ENCODE measurements at regions of chr14 and their contacts with region 1.

Region 1: GRCh38 chr14:57378669-57379068 is 11.7 kb upstream of the NAA30 start:
- DNase-seq: no peak
- H3K4me3 Mint-ChIP-seq: no peak overlapping the region
- H3K27ac Mint-ChIP-seq: no peak overlapping the region
- H3K4me1 Mint-ChIP-seq: peaks cover 6% of the 10 kb centered on the region
- H3K27me3 Mint-ChIP-seq: no peaks in the 10 kb centered on the region
- CTCF ChIP-seq: no peak

Region 2: GRCh38 chr14:56092763-56093162 is 1285.9 kb before region 1 on chr14:
- CTCF ChIA-PET with region 1: interaction called, 11 read pairs
- intact Hi-C with region 1: no loop called
- DNase-seq: no peak
- H3K4me3 Mint-ChIP-seq: no peak overlapping the region
- H3K27ac Mint-ChIP-seq: no peak overlapping the region
- H3K4me1 Mint-ChIP-seq: peaks cover 13% of the 10 kb centered on the region
- H3K27me3 Mint-ChIP-seq: no peaks in the 10 kb centered on the region
- CTCF ChIP-seq: no peak

Region 3: DNA sequence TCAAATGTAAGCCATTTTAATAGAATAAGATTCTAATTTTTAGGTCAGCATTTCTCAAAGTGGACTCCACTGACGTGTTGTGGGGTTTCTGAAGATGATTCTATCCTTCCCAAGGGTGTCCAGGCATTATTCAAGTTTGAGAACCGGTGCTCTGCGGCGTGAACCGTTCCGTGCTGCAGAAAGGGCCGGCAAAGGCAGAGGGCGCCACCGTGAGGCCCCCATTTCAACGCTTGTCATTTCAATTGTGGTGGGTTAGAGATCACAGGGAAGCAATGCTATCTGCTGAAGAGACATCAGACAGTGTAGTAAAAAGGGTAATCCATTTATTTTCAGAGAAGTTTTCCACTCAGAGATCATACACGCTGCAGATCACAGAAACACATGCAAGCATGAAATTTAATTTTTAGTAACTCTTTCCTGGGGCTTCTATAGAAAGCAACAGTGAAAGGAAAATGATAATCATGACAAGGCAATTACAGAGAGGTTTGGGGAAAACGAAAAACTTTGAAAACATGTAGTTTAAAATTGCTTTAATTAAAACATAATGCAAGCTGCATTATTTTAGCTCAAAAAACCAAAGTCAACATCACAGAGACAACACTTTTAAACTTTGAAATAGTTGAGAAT is 311.7 kb before region 1 on chr14:
- CTCF ChIA-PET with region 1: no interaction called
- intact Hi-C with region 1: loop called (anchors 10 kb)
- DNase-seq: peak; percentile 52
- H3K4me3 Mint-ChIP-seq: no peak overlapping the region
- H3K27ac Mint-ChIP-seq: no peak overlapping the region
- H3K4me1 Mint-ChIP-seq: no peaks in the 10 kb centered on the region
- H3K27me3 Mint-ChIP-seq: peaks cover 11% of the 10 kb centered on the region
- CTCF ChIP-seq: peak; percentile 55

Region 4: DNA sequence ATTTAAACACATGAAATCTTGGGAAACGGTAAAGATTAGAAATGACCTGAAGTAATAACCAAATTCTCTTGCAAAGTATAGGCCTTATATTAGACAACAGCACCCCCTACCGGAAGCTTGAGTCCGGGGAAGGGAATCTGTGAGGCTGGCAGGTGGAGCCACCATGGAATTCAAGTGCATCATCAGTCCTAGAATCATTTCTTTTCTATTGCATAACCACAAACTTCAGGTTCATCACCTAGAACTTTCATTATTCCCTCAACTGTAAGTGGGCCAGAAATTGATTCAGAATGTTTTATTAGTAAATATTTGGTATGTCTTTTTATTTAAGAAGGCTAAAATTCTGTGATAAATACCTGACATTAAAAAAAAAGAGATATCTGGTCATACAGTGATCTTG is 61.4 kb before region 1 on chr14:
- CTCF ChIA-PET with region 1: interaction called, 4 read pairs
- intact Hi-C with region 1: loop called (anchors 1 kb)
- DNase-seq: peak; percentile 86
- H3K4me3 Mint-ChIP-seq: no peak overlapping the region
- H3K27ac Mint-ChIP-seq: no peak overlapping the region
- H3K4me1 Mint-ChIP-seq: no peaks in the 10 kb centered on the region
- H3K27me3 Mint-ChIP-seq: no peaks in the 10 kb centered on the region
- CTCF ChIP-seq: peak; percentile 43

Region 5: GRCh38 chr14:57390028-57390805 is 11.5 kb after region 1 on chr14 and contains the start of gene NAA30:
- CTCF ChIA-PET with region 1: interaction called, 15 read pairs
- intact Hi-C with region 1: no loop called
- DNase-seq: peak; percentile 92
- H3K4me3 Mint-ChIP-seq: peak within 1 kb of the TSS; percentile 98
- H3K27ac Mint-ChIP-seq: peak within 1 kb of the TSS; percentile 85
- H3K4me1 Mint-ChIP-seq: peaks cover 10% of the 10 kb centered on the region
- H3K27me3 Mint-ChIP-seq: no peaks in the 10 kb centered on the region
- CTCF ChIP-seq: no peak
- total RNA-seq, gene NAA30: 16.0 and 17.2 TPM in 2 replicates

Region 6: DNA sequence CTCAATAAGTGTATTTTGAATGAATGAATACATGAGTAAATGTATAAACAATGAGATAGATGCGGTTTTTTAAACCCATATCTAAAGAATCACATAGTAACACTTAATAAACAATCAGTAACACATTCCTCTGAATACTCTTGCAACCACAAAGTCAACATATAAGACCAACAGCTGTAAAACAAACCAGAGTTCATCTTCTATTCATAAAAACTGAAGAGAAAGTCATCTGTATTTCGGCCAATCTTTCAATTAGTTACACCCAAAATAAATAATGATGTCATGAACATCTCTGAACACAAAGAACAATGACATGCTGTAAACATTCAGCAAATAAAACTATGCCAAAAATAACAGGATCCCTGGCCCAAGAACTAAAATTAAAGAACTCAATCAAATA is 726.1 kb after region 1 on chr14:
- CTCF ChIA-PET with region 1: no interaction called
- intact Hi-C with region 1: no loop called
- DNase-seq: no peak
- H3K4me3 Mint-ChIP-seq: no peak overlapping the region
- H3K27ac Mint-ChIP-seq: no peak overlapping the region
- H3K4me1 Mint-ChIP-seq: peaks cover 15% of the 10 kb centered on the region
- H3K27me3 Mint-ChIP-seq: peaks cover 49% of the 10 kb centered on the region
- CTCF ChIP-seq: no peak